ENCODE measurements at regions of chr5 and their contacts with region 1.

Region 1: GRCh38 chr5:177113566-177114424 is 19.8 kb upstream of the NSD1 start:
- DNase-seq: peak; percentile 52 to 81
- H3K4me3 ChIP-seq: no peak overlapping the region
- H3K27ac ChIP-seq: no peak overlapping the region
- H3K4me1 ChIP-seq: no peaks in the 10 kb centered on the region
- H3K27me3 ChIP-seq: no peaks in the 10 kb centered on the region
- CTCF ChIP-seq: peak; percentile 98

Region 2: DNA sequence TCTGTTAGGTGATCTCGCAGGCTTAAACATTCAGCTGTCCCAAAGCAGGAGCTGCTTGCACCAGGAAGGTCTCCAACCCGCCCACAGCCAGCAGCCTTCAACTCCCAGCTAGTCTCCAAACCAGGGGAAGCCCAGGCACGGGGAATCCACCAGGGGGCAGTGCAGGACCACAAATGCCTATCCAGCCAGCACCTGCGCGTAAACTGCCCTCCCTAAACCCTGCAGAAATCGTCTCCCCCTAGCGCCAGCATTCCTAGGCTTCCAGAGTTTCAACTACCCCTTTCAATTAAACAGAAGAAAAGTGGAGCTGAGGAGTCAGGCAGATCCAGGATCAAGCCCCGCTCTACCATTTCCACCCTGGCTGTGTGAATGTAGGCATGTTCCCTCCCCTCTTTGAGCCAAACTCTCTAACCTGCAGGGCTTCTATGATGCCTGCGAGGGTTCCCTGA is 1383.9 kb before region 1 on chr5:
- CTCF ChIA-PET with region 1: no interaction called
- POLR2A ChIA-PET with region 1: no interaction called
- intact Hi-C with region 1: loop called (anchors 5 kb)
- DNase-seq: peak; percentile 77 to 95
- H3K4me3 ChIP-seq: no peak overlapping the region
- H3K27ac ChIP-seq: no peak overlapping the region
- H3K4me1 ChIP-seq: no peaks in the 10 kb centered on the region
- H3K27me3 ChIP-seq: no peaks in the 10 kb centered on the region
- CTCF ChIP-seq: peak; percentile 98

Region 3: GRCh38 chr5:176822041-176822792 is 291.6 kb before region 1 on chr5:
- CTCF ChIA-PET with region 1: no interaction called
- POLR2A ChIA-PET with region 1: no interaction called
- intact Hi-C with region 1: loop called (anchors 10 kb)
- DNase-seq: peak; percentile 96 to 99
- H3K4me3 ChIP-seq: peak overlapping the region; percentile 56; the same call in 1 of the 2 replicates
- H3K27ac ChIP-seq: peak overlapping the region; percentile 99
- H3K4me1 ChIP-seq: peaks cover 40% of the 10 kb centered on the region
- H3K27me3 ChIP-seq: no peaks in the 10 kb centered on the region
- CTCF ChIP-seq: no peak

Region 4: GRCh38 chr5:177265395-177265794 is 151.6 kb after region 1 on chr5:
- CTCF ChIA-PET with region 1: interaction called, 16 read pairs
- POLR2A ChIA-PET with region 1: no interaction called
- intact Hi-C with region 1: no loop called
- DNase-seq: no peak
- H3K4me3 ChIP-seq: no peak overlapping the region
- H3K27ac ChIP-seq: no peak overlapping the region
- H3K4me1 ChIP-seq: no peaks in the 10 kb centered on the region
- H3K27me3 ChIP-seq: no peaks in the 10 kb centered on the region
- CTCF ChIP-seq: no peak

Region 5: DNA sequence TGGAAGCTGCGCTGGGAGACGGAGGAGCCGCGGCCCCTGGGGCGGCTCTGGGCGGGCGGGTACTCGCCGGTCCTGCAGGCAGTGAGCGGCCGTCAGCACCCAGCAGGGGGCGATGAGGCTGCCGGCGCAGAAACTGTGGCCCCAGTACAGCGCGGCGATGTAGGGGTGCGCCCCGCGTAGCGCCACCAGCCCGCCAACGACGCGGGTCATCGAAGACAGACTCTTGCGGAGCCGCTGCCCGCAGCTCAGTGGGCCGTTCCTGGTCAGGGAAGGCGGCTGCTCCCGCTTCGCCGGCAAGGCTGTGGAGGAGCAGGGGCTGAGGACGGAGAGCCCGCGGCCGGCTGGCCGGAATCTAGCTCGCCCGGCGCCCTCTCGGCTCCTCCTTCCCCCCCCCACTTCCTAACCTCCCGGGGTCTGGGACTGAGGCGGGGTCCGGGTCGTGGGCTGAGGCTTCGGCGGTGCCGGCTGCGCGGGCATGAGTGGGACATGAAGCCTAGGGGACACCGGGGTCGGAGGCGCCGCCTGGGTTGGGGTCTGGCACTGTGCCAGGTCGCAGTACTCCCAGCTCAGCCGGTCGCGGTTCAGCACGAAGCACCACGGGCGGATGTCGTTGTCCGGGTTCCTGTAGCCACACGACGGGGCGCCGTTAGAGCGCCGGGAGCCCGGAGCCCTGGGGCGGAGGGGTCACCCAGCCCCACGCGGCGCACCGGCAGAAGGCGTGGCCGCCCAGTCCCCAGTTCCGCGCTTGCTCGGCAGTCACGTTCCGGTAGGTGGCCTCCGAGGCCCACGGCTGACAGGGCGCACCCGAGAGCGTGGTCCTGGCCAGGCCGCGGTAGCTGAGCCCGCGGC is 290.2 kb after region 1 on chr5:
- CTCF ChIA-PET with region 1: no interaction called
- POLR2A ChIA-PET with region 1: no interaction called
- intact Hi-C with region 1: loop called (anchors 1 kb)
- DNase-seq: peak; percentile 51 to 86
- H3K4me3 ChIP-seq: peak overlapping the region; percentile 78
- H3K27ac ChIP-seq: no peak overlapping the region
- H3K4me1 ChIP-seq: peaks cover 3% of the 10 kb centered on the region; the same call in 1 of the 2 replicates
- H3K27me3 ChIP-seq: no peaks in the 10 kb centered on the region
- CTCF ChIP-seq: peak; percentile 73

Region 6: DNA sequence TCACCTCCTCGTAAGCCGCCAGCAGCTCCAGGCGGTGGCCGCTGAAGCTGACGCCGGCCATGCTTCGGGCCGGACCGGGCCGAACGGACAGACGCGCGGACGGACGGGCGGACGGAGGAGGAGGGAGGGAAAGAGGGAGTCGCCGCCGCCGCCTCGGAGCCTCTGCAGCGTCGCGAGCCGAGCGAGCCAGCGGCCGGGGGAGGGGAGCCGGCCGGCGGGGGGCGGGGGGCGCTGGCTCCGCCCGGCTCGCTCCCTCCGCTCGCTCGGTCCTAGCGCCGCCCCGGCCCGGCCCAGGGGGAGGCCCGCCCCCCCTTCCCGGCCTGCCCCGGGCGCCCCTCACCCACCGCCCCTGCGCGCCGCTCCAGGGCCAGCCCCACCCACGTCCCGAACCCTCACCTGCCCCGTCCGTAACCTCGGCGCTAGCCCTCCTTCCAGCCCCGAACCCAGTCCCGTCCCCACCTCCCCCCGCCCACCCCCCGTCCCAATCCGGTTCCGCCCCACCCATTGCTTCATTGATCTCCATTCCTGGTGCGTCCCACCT is 359.7 kb after region 1 on chr5 and contains the start of gene DBN1:
- CTCF ChIA-PET with region 1: no interaction called
- POLR2A ChIA-PET with region 1: interaction called, 10 read pairs
- intact Hi-C with region 1: no loop called
- DNase-seq: no peak
- H3K4me3 ChIP-seq: peak within 1 kb of the TSS; percentile 79
- H3K27ac ChIP-seq: no peak within 1 kb of the TSS
- H3K4me1 ChIP-seq: peaks cover 22% of the 10 kb centered on the region
- H3K27me3 ChIP-seq: no peaks in the 10 kb centered on the region
- CTCF ChIP-seq: no peak
- total RNA-seq, gene DBN1: 144 and 181 TPM in 2 replicates

Measured in PC-9 (cell line).